ENCODE measurements at regions of chr20 and their contacts with region 1.

Region 1: DNA sequence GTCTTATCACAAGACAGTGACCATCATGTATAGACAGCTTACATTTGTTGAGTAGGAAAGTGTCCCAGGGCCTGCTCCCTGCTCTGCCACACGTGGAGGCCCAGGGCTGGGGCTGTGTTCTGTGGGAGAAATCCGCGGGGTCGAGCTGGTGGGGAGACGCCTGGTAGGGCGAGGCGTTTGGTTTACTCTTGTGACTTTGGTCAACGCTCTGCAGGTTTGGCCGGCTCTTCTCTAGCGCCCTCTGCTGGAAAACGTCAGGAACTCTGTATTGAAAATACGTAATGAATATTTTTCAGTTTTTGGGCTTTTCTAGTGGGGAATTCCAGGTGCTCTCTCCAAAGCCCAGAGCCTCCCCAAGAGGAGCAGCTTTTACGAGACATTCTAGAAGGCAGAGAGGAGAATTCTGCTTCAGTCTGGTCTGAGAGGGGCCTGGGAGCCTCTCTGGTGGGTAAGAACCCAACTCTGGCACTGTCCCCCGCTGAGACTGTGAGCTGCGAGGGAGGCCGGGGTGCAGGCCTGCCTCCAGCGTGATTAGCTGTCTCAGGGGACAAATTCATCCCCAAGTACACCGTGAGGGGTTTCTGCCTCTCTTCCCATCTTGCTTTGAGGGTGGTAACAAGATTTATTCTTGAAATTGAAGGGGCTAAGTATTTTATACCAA is 112.6 kb upstream of the RALGAPA2 start:
- DNase-seq: peak in 1 of 2 experiments; percentile 83
- H3K4me3 ChIP-seq: no peak overlapping the region
- H3K27ac ChIP-seq: no peak overlapping the region
- H3K4me1 ChIP-seq: peaks cover 8 to 16% (median 11%) of the 10 kb centered on the region in 4 experiments; a peak in 6 of 7 replicates
- H3K27me3 ChIP-seq: peaks cover 0 to 2% (median 0%) of the 10 kb centered on the region in 4 experiments; a peak in 1 of 7 replicates
- CTCF ChIP-seq: peak; percentile 44 to 84 (median 80)
- EP300 ChIP-seq: no peak
- POLR2A ChIP-seq: no peak
- RAD21 ChIP-seq: peak; percentile 74 to 84

Region 2: GRCh38 chr20:20664795-20665589 is 160.1 kb before region 1 on chr20:
- CTCF ChIA-PET with region 1: interaction called, 11 read pairs
- POLR2A ChIA-PET with region 1: no interaction called
- DNase-seq: no peak
- H3K4me3 ChIP-seq: no peak overlapping the region
- H3K27ac ChIP-seq: no peak overlapping the region
- H3K4me1 ChIP-seq: peaks cover 0 to 14% (median 3%) of the 10 kb centered on the region in 4 experiments; a peak in 4 of 7 replicates
- H3K27me3 ChIP-seq: no peaks in the 10 kb centered on the region; a peak in 1 of 7 replicates
- CTCF ChIP-seq: peak in 2 of 3 experiments; percentile 50 to 52; a peak in 3 of 4 replicates
- EP300 ChIP-seq: no peak
- POLR2A ChIP-seq: no peak
- RAD21 ChIP-seq: peak; percentile 71 to 76

Region 3: GRCh38 chr20:20772602-20773001 is 52.5 kb before region 1 on chr20:
- CTCF ChIA-PET with region 1: no interaction called
- POLR2A ChIA-PET with region 1: no interaction called
- DNase-seq: no peak
- H3K4me3 ChIP-seq: no peak overlapping the region
- H3K27ac ChIP-seq: no peak overlapping the region
- H3K4me1 ChIP-seq: no peaks in the 10 kb centered on the region
- H3K27me3 ChIP-seq: no peaks in the 10 kb centered on the region
- CTCF ChIP-seq: no peak
- EP300 ChIP-seq: no peak
- POLR2A ChIP-seq: no peak
- RAD21 ChIP-seq: no peak

Region 4: GRCh38 chr20:20799716-20800312 is 25.2 kb before region 1 on chr20:
- CTCF ChIA-PET with region 1: interaction called, 39 read pairs
- POLR2A ChIA-PET with region 1: no interaction called
- DNase-seq: no peak
- H3K4me3 ChIP-seq: no peak overlapping the region
- H3K27ac ChIP-seq: no peak overlapping the region
- H3K4me1 ChIP-seq: no peaks in the 10 kb centered on the region
- H3K27me3 ChIP-seq: no peaks in the 10 kb centered on the region
- CTCF ChIP-seq: no peak
- EP300 ChIP-seq: no peak
- POLR2A ChIP-seq: no peak
- RAD21 ChIP-seq: no peak

Region 5: DNA sequence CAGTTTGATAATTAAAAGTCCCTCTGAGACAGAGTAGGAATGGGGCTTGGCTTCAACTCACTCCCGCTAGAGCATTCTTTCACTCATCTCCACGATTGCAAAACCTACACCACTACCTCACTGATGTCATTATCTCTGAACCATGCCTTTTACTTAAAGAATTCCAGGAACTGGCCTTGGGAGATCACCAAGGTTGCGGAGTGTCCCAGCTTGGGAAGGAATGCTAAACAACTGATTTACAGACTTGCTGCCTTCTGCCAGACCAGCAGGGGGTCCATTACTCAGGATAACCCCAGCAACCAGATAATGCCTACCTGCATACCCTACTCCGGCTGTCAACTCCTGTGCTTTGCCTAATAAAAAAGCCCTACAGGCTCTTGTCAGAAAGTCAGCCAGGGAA is 10.4 kb before region 1 on chr20:
- CTCF ChIA-PET with region 1: interaction called, 25 read pairs
- POLR2A ChIA-PET with region 1: no interaction called
- DNase-seq: peak; percentile 54 to 86
- H3K4me3 ChIP-seq: peak overlapping the region in 1 of 4 experiments; percentile 11; a peak in 1 of 8 replicates
- H3K27ac ChIP-seq: no peak overlapping the region
- H3K4me1 ChIP-seq: peaks cover 0 to 11% (median 7%) of the 10 kb centered on the region in 4 experiments; a peak in 4 of 7 replicates
- H3K27me3 ChIP-seq: no peaks in the 10 kb centered on the region
- CTCF ChIP-seq: no peak
- EP300 ChIP-seq: no peak
- POLR2A ChIP-seq: no peak
- RAD21 ChIP-seq: 0 out of 4 replicates have a peak, but pooled peaks of 1 of the 2 experiments have one; percentile 12

Region 6: GRCh38 chr20:20903773-20904500 is 78.9 kb after region 1 on chr20:
- CTCF ChIA-PET with region 1: no interaction called
- POLR2A ChIA-PET with region 1: no interaction called
- DNase-seq: no peak
- H3K4me3 ChIP-seq: no peak overlapping the region
- H3K27ac ChIP-seq: no peak overlapping the region
- H3K4me1 ChIP-seq: no peaks in the 10 kb centered on the region
- H3K27me3 ChIP-seq: no peaks in the 10 kb centered on the region
- CTCF ChIP-seq: no peak
- EP300 ChIP-seq: no peak
- POLR2A ChIP-seq: no peak
- RAD21 ChIP-seq: no peak

Region 7: DNA sequence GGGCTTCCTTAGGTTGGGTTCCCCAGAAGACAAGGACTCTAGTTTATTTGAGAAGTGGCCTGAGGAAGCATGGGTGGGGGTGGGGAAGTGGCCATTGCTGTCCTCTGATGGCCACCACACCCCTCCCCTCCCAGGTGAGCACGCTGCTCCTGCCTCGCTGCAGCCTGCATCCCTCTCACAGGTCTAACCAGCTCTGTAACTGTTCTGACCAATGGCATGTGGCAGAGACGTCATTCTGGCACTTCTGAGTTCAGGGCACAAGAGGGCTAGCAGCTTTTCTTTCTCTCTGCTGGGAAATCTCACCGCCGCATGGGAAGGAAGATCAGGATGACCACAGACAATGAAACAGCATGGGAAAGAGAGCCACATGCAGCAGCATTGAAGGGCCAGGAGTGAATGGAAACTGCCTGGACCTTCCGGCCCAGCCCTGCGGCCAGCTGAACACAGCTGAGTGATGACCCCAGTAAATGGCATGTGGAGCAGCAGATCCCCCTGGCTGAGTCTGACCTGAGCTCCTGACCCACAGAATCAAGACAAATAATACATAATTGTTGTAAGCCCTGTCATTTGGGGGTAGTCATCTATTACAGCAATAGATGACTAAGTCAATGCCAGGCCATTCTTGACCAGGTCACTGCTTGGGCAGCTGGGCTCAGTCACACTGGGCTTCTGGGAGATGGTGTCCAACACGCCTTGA is 101.3 kb after region 1 on chr20:
- CTCF ChIA-PET with region 1: no interaction called
- POLR2A ChIA-PET with region 1: no interaction called
- DNase-seq: no peak
- H3K4me3 ChIP-seq: no peak overlapping the region
- H3K27ac ChIP-seq: no peak overlapping the region
- H3K4me1 ChIP-seq: peaks cover 0 to 2% (median under 1%) of the 10 kb centered on the region in 4 experiments; a peak in 2 of 7 replicates
- H3K27me3 ChIP-seq: no peaks in the 10 kb centered on the region
- CTCF ChIP-seq: no peak
- EP300 ChIP-seq: no peak
- POLR2A ChIP-seq: no peak
- RAD21 ChIP-seq: no peak

Measured in H1 (cell line).